ENCODE measurements at regions of chr11 and their contacts with region 1.

Region 1: DNA sequence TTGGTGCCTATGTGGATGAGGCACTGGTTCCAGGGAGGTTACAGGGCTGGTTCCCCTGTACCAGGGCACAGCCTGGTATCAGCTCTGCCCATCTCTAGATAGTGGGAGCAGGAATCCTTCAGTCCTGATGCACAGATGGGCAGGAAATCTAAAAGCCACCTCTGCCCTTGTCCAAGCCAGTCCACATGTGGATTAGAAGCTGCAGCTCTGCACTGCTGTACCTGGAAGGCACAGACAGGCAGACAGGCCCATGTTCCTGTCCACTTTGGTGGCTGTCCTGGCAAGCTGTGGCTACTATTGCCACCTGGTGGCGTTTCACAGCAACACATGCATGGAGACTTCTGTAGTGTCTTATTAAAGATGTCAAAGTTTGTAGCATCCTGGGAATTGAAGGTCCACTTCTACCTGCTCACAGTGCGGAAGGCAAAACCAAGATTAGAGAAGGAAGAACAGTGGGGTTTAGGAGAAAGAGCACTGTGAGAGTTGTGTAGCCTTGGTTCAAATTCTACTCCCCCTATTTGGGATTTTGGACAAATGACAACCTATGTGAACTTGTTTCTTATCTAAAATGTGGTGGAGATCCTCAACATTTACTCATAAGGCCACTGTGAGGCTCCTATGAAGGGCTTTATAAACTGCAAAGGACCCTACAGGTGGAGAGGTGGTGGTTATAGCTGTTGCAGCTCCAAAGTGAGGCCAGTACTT is 30.1 kb downstream of the NAV2 start:
- DNase-seq: peak; percentile 75
- H3K4me3 Mint-ChIP-seq: no peak overlapping the region
- H3K27ac Mint-ChIP-seq: no peak overlapping the region
- H3K4me1 Mint-ChIP-seq: no peaks in the 10 kb centered on the region
- H3K27me3 Mint-ChIP-seq: no peaks in the 10 kb centered on the region

Region 2: DNA sequence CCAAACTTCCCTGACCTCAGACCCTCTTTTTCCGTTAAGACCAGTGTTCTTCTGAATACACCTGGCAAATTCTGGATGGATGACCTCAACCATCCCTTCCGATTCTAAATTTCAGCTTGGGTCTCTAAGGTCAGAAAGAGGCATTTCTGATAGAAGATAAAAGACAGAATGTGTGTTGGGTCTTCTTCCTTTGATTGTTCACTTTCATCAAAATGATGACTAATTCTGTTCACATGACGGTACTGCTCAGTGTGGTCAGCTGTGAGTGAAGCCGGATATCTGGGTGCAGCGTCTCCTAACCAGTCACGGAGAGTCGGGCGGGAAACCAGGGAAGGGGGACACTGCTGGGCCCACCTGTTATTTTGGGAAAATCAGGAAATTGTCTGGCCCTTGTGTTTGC is 181.7 kb before region 1 on chr11:
- CTCF ChIA-PET with region 1: interaction called, 46 read pairs
- POLR2A ChIA-PET with region 1: interaction called, 3 read pairs
- DNase-seq: no peak
- H3K4me3 Mint-ChIP-seq: no peak overlapping the region
- H3K27ac Mint-ChIP-seq: no peak overlapping the region
- H3K4me1 Mint-ChIP-seq: no peaks in the 10 kb centered on the region
- H3K27me3 Mint-ChIP-seq: peaks cover 20% of the 10 kb centered on the region

Region 3: GRCh38 chr11:19566583-19567379 is 176.0 kb before region 1 on chr11:
- CTCF ChIA-PET with region 1: interaction called, 46 read pairs
- POLR2A ChIA-PET with region 1: interaction called, 3 read pairs
- DNase-seq: no peak
- H3K4me3 Mint-ChIP-seq: no peak overlapping the region
- H3K27ac Mint-ChIP-seq: no peak overlapping the region
- H3K4me1 Mint-ChIP-seq: no peaks in the 10 kb centered on the region
- H3K27me3 Mint-ChIP-seq: peaks cover 16% of the 10 kb centered on the region